Heart left ventricle (tissue), 16 donors: ENCODE measurements at regions of chr6 and their contacts with region 1.

Region 1: DNA sequence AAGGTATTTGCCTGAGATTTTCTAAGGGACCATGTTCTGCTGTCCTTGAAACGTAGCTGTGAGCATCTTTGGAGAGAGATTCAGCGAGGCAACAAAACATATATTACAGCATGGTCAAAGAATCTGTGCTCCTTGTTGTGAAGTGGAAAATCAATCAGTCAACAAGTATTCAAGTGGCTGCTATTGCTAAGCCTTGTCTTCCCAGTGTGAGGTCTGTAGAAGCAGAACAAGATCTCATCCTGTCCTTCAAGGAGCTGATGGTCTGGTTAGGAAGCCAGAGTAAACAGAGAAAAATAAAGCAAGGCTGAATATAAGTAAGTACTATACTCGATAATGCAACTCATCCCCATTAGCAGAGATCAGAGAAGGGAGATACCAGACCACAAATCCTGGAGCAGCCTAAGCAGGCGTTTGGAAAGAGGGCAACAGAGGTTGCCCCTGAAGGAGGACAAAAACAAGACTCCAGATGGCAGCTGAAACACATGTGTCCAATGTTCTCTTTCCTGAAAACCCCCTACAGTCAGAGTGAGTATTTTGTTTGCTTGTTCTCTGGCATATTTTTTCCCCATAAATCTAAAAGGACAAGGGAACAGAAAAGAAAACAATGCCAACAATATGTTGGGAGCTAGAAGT is 392.0 kb downstream of the SYNE1 start:
- DNase-seq: no peak
- ATAC-seq: peak; percentile 43 to 76 (median 62)
- H3K4me3 ChIP-seq: peak overlapping the region in 2 of 12 donors; percentile 7 to 11
- H3K27ac ChIP-seq: peak overlapping the region; percentile 45 to 82 (median 76)
- H3K4me1 ChIP-seq: peaks cover 0 to 66% (median 30%) of the 10 kb centered on the region in 12 donors
- H3K27me3 ChIP-seq: no peaks in the 10 kb centered on the region
- CTCF ChIP-seq: no peak
- POLR2A ChIP-seq: no peak

Region 2: GRCh38 chr6:151962246-151962846 is 282.8 kb before region 1 on chr6:
- intact Hi-C with region 1: no loop called
- DNase-seq: no peak
- ATAC-seq: no peak
- H3K4me3 ChIP-seq: no peak overlapping the region
- H3K27ac ChIP-seq: no peak overlapping the region
- H3K4me1 ChIP-seq: no peaks in the 10 kb centered on the region
- H3K27me3 ChIP-seq: no peaks in the 10 kb centered on the region
- CTCF ChIP-seq: no peak
- POLR2A ChIP-seq: no peak

Region 3: DNA sequence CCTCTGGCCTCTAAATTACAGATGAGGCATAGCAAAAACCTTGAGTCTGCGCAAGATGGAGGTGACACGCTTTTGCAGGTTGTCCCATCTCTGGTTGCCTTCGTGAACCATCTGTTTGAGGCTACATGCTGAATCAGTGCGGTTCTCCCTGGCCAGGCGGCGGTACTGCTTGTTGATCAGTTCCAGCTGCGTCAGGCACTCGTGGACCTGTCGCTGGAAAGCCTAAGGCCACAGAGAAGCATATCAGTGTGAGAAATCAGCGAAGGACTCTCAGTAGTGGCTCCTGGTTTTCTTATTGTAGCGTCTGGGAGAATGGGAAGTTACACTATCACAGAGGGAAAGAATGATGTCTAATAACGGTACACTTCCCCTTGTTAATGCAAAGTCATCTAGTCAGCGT is 93.2 kb before region 1 on chr6:
- intact Hi-C with region 1: loop called in 1 of 10 experiments (anchors 10 kb)
- DNase-seq: no peak
- ATAC-seq: peak in 1 of 4 donors; percentile 6
- H3K4me3 ChIP-seq: no peak overlapping the region
- H3K27ac ChIP-seq: no peak overlapping the region
- H3K4me1 ChIP-seq: peaks cover 0 to 13% (median 2%) of the 10 kb centered on the region in 12 donors
- H3K27me3 ChIP-seq: no peaks in the 10 kb centered on the region
- CTCF ChIP-seq: no peak
- POLR2A ChIP-seq: no peak

Region 4: DNA sequence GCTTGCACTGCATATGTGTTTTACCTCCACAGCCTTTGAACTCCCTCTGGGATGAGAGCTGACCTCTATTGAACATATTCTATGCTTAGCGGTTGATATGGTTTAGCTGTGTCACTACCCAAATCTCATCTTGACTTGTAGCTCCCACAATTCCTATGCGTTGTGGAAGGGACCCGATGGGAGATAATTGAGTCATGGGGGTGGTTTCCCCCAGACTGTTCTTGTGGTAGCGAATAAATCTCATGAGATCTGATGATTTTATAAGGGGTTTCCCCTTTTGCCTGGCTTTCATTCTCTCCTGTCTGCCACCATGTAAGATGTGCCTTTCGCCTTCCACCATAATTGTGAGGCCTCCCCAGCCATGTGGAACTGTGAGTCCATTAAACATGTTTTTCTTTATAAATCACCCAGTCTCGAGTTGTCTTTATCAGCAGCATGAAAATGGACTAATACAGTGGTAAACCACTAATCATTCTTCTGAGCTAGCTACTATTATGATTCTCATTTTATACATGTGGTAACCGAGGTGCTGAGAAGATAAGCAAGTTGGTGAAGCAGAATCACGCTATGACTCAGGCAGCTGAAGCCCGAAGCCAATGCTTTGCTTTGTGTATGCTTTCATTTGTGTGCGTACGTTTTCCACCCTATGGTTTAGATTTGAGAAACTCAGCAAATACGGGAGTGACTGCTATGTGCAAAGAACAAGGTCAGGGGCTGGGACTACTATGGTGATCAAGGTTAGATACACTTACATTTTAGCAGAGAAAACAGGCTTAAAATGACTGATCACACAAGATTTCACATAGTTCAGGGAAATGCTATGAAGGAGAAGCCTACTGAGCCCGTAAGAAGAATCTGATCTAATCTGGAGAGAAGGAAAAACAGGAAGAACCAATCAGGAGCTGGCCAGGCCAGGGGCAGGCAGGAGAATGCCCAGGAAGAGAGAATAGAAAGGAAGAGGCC is 74.1 kb before region 1 on chr6:
- intact Hi-C with region 1: loop called in 1 of 10 experiments (anchors 10 kb)
- DNase-seq: no peak
- ATAC-seq: peak in 2 of 4 donors; percentile 7 to 8
- H3K4me3 ChIP-seq: no peak overlapping the region
- H3K27ac ChIP-seq: peak overlapping the region in 11 of 12 donors; percentile 7 to 72 (median 52)
- H3K4me1 ChIP-seq: peaks cover 0 to 32% (median 11%) of the 10 kb centered on the region in 12 donors
- H3K27me3 ChIP-seq: no peaks in the 10 kb centered on the region
- CTCF ChIP-seq: no peak
- POLR2A ChIP-seq: no peak

Region 5: DNA sequence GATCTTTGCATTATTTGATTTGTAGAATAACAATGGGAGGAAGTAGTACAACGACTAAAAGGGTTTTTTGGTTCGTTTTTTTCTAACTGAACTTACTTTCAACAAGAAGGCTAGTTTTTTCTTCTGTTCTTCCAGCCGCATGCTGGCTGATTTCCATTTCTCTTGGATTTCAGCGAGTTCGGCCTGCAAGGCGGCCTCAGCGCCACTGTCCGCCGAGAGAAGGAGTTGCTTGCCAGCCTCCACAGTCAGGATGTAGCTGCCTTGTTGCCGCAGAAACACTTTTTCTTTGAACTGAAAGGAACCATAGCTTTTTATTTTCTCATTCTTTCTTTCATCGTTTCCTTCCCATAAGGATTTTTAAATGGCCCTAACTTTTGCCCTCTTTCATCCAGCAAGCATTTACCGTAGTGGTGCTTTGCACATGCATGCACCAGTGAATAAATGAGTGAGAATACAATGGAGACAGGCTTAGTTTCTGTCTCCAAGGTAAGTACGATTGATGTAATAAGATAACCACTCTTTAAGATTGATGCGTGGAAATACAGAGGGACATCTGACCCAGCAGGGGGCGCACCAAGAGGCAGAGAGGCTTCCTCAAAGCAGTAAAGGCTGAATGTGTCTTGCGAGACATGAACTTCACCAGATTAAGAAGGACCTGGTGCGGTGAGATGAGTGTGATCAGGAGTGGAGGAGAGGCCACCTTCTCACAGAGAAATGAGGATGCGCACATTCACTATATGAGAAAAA is 38.9 kb before region 1 on chr6:
- intact Hi-C with region 1: loop called in 2 of 10 experiments (anchors 5 kb)
- DNase-seq: no peak
- ATAC-seq: no peak
- H3K4me3 ChIP-seq: no peak overlapping the region
- H3K27ac ChIP-seq: no peak overlapping the region
- H3K4me1 ChIP-seq: no peaks in the 10 kb centered on the region
- H3K27me3 ChIP-seq: no peaks in the 10 kb centered on the region
- CTCF ChIP-seq: peak in 11 of 12 donors; percentile 20 to 53 (median 44)
- POLR2A ChIP-seq: no peak

Region 6: GRCh38 chr6:152212437-152212836 is 32.7 kb before region 1 on chr6:
- intact Hi-C with region 1: loop called in 2 of 10 experiments (anchors 5 kb)
- DNase-seq: no peak
- ATAC-seq: no peak
- H3K4me3 ChIP-seq: no peak overlapping the region
- H3K27ac ChIP-seq: no peak overlapping the region
- H3K4me1 ChIP-seq: no peaks in the 10 kb centered on the region
- H3K27me3 ChIP-seq: no peaks in the 10 kb centered on the region
- CTCF ChIP-seq: no peak
- POLR2A ChIP-seq: no peak

Region 7: DNA sequence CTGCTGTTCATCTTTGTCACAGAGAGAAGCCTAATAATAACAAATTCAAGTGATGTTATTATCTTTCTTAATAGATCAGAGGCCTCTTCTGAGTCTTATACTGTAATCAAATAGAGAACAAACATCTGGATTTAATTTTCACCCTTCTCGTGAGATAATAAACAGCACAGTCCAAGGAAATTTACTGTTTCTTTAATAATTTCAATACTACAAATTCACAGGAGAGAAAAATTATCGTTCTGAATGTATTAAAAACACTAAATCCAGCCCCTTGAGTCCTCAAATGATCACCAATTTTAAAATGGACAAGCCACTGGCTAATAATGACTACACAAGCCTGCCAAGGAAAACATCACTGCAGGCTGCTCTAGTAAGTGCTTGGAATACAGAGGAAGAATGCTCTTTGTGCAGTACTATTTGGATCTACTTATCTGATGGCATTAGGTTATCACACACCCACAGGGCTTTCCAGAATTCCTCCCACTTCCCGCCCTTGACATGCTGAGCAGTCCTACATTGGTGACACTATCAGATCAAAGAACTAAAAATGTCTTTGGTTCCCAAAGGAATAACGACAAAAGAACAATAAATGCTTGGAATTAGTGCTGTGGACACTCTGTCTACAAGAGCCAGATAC is 353.9 kb after region 1 on chr6:
- intact Hi-C with region 1: no loop called
- DNase-seq: peak in 4 of 5 donors; percentile 21 to 59 (median 40)
- ATAC-seq: peak; percentile 88 to 99 (median 92)
- H3K4me3 ChIP-seq: no peak overlapping the region
- H3K27ac ChIP-seq: peak overlapping the region in 9 of 12 donors; percentile 6 to 71 (median 40)
- H3K4me1 ChIP-seq: peaks cover 0 to 47% (median 10%) of the 10 kb centered on the region in 12 donors
- H3K27me3 ChIP-seq: no peaks in the 10 kb centered on the region
- CTCF ChIP-seq: no peak
- POLR2A ChIP-seq: no peak